ENCODE measurements at regions of chr7 and their contacts with region 1.

Region 1: GRCh38 chr7:98106647-98107445 is at the start of gene LMTK2:
- DNase-seq: peak; percentile 96
- ATAC-seq: peak; percentile 98
- H3K4me3 Mint-ChIP-seq: peak within 1 kb of the TSS; percentile 98
- H3K27ac Mint-ChIP-seq: peak within 1 kb of the TSS; percentile 97
- H3K4me1 Mint-ChIP-seq: peaks cover 39% of the 10 kb centered on the region
- H3K27me3 Mint-ChIP-seq: no peaks in the 10 kb centered on the region
- CTCF ChIP-seq: peak; percentile 80
- total RNA-seq, gene LMTK2: 23.0 to 25.5 TPM (median 24.3 TPM) in 3 replicates

Region 2: DNA sequence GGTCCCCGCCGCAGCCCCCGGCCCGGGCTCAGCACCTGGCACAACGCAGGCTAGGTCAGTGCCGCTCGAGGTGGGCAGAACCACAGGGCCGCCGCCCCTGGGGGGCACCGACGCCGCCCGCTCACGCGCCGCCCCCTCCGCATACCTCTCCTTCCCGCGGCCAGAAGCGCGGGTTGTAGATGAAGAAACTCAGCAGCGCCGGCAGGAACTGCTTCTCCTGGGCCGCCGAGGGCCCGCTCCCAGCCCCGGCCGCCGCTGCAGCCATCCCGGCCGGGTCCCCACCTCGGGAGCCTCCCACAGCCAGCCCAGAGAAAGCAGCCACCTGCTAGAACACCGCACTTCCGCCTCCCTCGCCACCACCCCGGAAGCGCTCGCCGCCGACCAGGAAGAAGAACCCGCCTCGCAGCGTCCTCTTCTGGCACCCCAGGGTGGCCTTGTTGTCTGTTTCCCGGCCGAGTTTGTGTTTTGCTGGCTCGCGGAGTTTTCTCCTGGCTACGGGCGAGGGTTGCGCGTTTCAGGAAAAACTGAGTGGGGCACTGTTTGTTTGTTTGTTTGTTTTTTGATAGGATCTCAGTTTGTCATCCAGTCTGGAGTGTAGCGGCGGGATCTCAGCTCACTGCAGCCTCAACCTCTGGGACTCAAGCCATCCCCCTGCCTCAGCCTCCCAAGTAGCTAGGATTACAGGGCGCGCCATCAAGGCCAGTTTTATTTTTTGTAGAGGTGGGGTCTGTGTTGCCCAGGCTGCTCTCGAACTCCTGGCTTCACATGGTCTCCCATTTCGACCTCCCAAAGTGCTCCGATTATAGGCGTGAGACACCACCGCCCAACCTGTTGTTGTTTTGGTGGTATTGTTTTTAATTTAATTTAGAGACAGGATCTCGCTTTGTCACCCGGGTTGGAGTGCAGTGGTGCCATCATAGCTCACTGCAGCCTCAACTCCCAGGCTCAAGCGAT is 134.6 kb before region 1 on chr7:
- CTCF ChIA-PET with region 1: interaction called, 10 read pairs
- POLR2A ChIA-PET with region 1: interaction called, 4 read pairs
- DNase-seq: peak; percentile 52
- ATAC-seq: peak; percentile 71
- H3K4me3 Mint-ChIP-seq: peak overlapping the region; percentile 93
- H3K27ac Mint-ChIP-seq: peak overlapping the region; percentile 74; the same call in 1 of the 2 replicates
- H3K4me1 Mint-ChIP-seq: peaks cover 13% of the 10 kb centered on the region
- H3K27me3 Mint-ChIP-seq: no peaks in the 10 kb centered on the region
- CTCF ChIP-seq: no peak

Region 3: DNA sequence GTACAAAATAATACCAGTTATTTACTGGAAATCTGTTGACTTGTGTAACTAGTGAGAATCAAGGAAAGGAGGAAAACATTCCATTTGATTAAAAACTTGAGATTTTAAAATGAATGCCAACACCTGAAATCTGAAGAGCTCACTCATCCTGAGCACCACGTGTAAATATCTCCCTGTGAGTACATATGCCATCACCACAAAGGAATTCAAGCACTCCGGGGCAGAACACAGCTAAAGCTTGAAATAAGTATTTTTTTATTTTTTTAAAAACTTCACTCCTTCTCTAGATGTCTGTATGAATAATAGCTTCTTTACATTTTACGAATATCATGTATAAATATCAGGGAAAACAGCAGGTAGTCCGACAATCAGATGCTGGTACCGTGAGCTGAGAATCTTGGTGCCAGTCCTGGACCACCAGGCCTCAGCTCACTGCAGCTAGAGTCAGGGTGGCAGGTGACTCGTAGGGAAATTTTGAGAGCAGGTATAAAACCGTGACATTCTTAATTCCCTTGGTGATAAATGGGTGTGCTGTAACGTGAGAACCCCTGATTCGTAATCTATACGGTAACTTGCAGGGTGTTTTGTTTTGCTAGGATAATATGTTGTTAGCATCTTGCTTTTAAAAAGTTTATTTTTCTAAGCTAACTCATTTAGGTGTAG is 12.5 kb after region 1 on chr7:
- CTCF ChIA-PET with region 1: interaction called, 13 read pairs
- POLR2A ChIA-PET with region 1: no interaction called
- DNase-seq: no peak
- ATAC-seq: no peak
- H3K4me3 Mint-ChIP-seq: peak overlapping the region; percentile 33; the same call in 1 of the 2 replicates
- H3K27ac Mint-ChIP-seq: peak overlapping the region; percentile 84; the same call in 1 of the 2 replicates
- H3K4me1 Mint-ChIP-seq: peaks cover 32% of the 10 kb centered on the region
- H3K27me3 Mint-ChIP-seq: no peaks in the 10 kb centered on the region
- CTCF ChIP-seq: no peak

Region 4: GRCh38 chr7:98168181-98168905 is 61.5 kb after region 1 on chr7:
- CTCF ChIA-PET with region 1: interaction called, 31 read pairs
- POLR2A ChIA-PET with region 1: no interaction called
- DNase-seq: peak; percentile 72
- ATAC-seq: peak; percentile 76
- H3K4me3 Mint-ChIP-seq: no peak overlapping the region
- H3K27ac Mint-ChIP-seq: peak overlapping the region; percentile 70; the same call in 1 of the 2 replicates
- H3K4me1 Mint-ChIP-seq: peaks cover 26% of the 10 kb centered on the region
- H3K27me3 Mint-ChIP-seq: no peaks in the 10 kb centered on the region
- CTCF ChIP-seq: peak; percentile 67